ENCODE measurements at regions of chr11 and their contacts with region 1.

Region 1: DNA sequence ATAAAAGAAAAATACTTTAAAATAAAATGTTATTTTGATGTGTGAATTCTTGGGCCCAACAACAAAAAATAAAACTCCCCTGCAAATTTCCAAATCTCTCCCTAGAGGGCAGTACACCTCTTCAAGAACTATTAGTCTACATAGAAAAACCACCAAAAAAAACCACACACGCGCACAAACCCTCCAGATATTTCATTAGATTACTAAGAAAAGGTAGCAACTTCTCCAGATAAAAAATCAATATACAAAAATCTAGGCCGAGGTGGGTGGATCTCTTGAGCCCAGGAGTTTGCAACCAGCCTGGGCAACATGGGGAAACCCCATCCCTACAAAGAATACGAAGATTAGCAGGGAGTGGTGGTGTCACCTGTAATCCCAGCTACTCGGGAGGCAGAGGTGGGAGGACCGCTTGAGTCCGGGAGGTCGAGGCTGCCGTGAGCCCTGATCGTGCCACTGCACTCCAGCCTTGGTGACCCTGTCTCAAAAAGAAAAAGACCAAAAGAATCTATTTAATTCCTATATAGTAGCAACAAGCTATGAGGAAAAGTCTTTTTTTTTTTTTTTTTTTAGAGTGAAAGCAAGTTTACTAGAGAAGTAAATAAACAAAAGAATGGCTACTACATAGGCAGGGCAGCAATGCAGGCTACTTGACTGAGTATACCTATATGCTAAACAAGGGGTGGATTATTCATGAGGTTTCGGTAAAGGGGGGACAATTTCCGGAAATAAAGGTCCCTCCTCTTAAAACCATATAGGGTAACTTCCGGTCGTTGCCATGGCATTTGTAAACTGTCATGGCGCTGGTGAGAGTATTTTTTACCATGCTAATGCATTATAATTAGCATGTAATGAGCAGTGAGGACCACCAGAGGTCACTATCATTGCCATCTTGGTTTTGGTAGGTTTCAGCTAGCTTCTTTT is 13.1 kb downstream of the B3GNT6 start:
- DNase-seq: peak; percentile 72
- H3K4me3 Mint-ChIP-seq: peak overlapping the region; percentile 30
- H3K27ac Mint-ChIP-seq: peak overlapping the region; percentile 2
- H3K4me1 Mint-ChIP-seq: peaks cover 14% of the 10 kb centered on the region
- H3K27me3 Mint-ChIP-seq: peaks cover 9% of the 10 kb centered on the region

Region 2: DNA sequence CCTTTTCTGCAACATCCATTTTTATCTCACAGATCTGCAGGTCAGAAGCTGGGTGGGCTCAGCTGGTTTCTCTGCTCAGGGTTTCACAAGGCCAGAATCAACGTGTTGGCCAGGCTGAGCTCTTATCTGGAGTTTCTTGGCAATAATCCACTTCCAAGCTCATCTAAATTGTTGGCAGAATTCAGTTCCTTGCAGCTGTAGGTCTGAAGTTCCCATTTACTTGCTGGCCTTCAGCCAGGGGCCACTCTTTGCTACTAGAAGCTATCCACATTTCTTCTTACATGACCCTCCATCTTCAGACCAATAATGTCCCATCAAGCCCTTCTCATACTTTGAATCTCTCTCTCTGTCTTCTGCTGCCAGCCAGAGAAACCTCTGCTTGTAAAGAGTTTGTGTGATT is 944.5 kb before region 1 on chr11:
- intact Hi-C with region 1: no loop called
- DNase-seq: no peak
- H3K4me3 Mint-ChIP-seq: no peak overlapping the region
- H3K27ac Mint-ChIP-seq: no peak overlapping the region
- H3K4me1 Mint-ChIP-seq: no peaks in the 10 kb centered on the region
- H3K27me3 Mint-ChIP-seq: no peaks in the 10 kb centered on the region

Region 3: DNA sequence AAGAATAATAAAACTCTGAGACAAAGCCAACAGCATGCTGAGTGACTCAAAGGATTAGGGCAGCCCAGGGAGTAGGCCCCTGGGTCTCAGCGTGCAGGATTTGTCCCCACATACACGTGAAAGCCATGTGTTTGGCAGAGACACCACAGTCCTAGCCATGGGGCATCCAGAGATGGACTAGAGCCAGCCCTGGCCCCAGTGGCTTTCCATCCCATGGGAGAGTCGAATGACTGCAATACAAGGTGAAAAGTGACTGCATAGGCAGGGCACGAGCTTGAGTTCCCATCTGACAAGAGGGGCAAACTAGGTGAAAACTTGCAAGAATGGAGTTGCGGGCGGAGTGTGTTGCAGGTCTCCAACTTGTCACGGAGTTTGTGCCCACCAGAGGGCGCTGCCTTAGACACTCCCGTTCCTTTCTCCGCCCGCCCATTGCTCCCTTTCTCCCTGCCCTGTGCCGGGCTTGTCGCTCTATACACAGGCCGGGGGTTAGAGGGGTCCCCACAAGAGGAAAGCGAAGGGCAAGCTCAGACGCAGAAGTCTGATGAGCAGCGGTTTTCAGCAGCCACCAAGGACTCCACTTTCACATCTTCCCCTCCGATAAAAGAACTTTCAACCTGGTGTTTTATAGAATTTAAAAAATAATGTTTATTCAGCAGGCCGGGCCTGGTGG is 239.9 kb before region 1 on chr11:
- intact Hi-C with region 1: loop called (anchors 1 kb)
- DNase-seq: peak; percentile 38
- H3K4me3 Mint-ChIP-seq: no peak overlapping the region
- H3K27ac Mint-ChIP-seq: no peak overlapping the region
- H3K4me1 Mint-ChIP-seq: peaks cover 43% of the 10 kb centered on the region
- H3K27me3 Mint-ChIP-seq: peaks cover 18% of the 10 kb centered on the region

Region 4: DNA sequence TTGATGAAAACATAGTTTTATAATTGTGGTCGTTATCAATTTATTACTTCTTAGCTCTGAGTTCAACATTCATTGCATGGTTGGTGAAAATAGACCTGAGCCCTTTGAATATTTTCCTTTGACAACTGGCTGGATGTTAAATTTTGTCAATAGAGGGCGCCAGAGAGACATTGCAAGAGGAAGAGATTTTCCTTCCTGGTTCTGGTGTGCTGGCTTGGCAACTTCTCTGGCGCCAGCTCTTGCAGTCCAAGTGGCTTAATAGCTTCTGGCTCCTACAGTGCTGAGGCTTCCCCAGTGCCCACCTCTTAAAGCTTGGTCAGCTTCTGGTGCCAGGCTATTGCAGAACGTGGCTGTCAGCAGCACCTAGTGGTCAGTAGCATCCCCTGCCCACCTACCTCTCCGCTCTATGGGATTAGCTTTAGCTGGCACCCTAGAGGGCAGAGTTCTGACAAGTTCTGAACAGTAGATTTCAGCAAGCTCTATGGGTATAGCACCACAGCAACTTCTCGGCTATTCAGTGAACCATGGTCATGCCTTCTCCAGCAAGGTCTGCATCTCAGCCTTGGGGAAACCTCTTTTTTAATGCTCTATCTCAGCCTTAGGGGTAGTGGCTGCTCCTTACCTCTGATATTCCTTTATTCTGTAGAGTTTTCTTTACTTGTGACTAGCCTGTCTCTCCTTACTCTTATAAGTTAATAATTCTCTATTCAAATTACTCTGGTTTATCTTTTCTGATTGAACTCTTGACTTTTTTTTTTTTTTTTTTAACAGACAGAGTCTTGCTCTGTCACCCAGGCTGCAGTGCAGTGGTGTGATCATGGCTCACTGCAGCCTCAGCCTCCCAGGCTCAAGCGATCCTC is 127.2 kb before region 1 on chr11:
- intact Hi-C with region 1: loop called (anchors 2 kb)
- DNase-seq: peak; percentile 51
- H3K4me3 Mint-ChIP-seq: no peak overlapping the region
- H3K27ac Mint-ChIP-seq: no peak overlapping the region
- H3K4me1 Mint-ChIP-seq: peaks cover 14% of the 10 kb centered on the region
- H3K27me3 Mint-ChIP-seq: peaks cover 2% of the 10 kb centered on the region

Region 5: DNA sequence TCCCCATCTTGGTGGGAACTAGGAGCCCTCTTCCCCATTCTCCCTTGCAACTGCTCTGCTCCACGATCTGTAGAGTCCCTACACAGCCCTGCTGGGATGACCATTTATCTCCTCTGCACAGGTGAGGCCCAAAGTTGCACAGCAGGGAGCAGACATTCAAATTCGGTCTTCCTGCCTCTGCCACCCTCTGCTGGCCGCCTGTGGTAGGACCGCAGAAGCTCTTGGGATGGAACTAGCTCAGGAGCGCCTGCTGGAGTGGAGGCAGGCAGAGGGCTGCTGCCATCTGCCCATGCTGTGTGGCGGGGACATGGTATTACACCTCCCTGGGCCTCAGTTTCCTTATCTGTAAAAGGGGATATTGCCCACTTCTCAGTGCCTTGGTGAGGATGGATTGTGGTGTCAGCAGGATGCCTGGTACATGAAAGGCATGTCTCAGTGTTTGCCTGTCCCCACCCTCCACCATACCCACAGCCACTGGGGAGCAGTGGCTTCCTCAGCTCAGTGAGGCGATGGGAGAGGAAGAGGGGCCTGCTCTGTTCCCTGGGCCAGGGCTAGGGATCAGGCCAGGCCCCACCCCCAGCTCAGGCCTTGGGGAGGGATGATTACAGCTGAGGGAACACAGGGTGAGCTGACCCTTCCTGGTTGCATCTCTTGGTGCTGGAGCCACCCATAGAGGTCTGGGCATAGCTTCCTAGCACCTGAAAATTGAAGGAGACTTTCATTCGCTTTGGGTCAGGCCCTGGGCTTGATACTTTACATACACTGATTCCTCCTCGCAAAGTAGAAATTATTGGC is 44.1 kb after region 1 on chr11:
- intact Hi-C with region 1: loop called (anchors 1 kb)
- DNase-seq: peak; percentile 69
- H3K4me3 Mint-ChIP-seq: no peak overlapping the region
- H3K27ac Mint-ChIP-seq: no peak overlapping the region
- H3K4me1 Mint-ChIP-seq: peaks cover 8% of the 10 kb centered on the region
- H3K27me3 Mint-ChIP-seq: peaks cover 3% of the 10 kb centered on the region

Region 6: GRCh38 chr11:77187776-77188632 is 140.7 kb after region 1 on chr11:
- intact Hi-C with region 1: loop called (anchors 2 kb)
- DNase-seq: peak; percentile 52
- H3K4me3 Mint-ChIP-seq: no peak overlapping the region
- H3K27ac Mint-ChIP-seq: no peak overlapping the region
- H3K4me1 Mint-ChIP-seq: no peaks in the 10 kb centered on the region
- H3K27me3 Mint-ChIP-seq: peaks cover 2% of the 10 kb centered on the region

Measured in activated T-helper 1 cell treated with anti-CD3 and anti-CD28 coated beads, Interleukin-12 subunit alpha, Interleukin-12 subunit beta, Interleukin-2, Interleukin-4 antibody, amounts not matched to agents 30 ng/mL and 10 ng/mL and 1 ng/mL, durations not matched to agents 14 hours and 24 hours and 36 hours (primary cell).